Posterior vena cava (tissue), 2 donors: ENCODE measurements at regions of chr20 and their contacts with region 1.

Region 1: GRCh38 chr20:58515233-58516184 is at the start of gene APCDD1L:
- DNase-seq: no peak
- total RNA-seq, gene APCDD1L: 0.88 to 1.5 TPM

Region 2: DNA sequence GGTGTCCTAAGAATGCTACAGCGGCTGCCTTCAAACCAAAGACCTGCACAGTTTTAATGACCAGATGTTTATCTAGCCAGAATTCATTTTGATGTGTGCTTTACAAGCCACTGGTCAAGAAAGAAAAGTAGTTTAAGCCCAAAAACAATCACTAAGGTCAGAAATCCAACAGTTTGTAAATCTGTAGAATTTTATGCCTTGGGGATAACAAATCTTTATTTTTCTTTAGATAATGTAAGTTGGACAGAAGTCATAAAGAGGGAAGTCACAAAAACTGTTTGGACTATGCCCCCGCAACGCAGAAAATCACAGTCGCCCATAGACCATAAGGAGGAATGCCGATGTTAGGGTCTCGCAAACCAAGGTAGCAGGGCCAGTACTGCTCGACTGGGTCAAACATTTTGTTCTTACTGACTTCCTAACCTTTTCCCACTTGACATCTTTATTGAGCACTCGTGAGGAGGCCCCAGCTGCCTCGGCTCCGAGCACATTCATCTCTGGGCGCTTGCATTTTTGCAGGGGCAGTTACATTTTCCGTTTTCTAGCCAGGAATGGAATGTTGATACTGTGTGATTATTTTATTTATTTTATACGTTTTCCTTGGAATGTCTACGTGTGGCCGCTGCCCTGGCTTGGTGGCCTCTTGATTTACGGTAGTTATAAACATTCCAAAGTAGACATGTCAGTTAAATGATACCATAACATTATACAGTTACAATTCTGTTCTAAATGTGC is 56.4 kb after region 1 on chr20:
- intact Hi-C with region 1: loop called in 1 of 2 experiments (anchors 10 kb)
- DNase-seq: no peak

Region 3: GRCh38 chr20:59469267-59470252 is 954.1 kb after region 1 on chr20:
- intact Hi-C with region 1: no loop called
- DNase-seq: peak; percentile 78